Motor neuron (in vitro differentiated cells): ENCODE measurements at regions of chr6 and their contacts with region 1.

Region 1: DNA sequence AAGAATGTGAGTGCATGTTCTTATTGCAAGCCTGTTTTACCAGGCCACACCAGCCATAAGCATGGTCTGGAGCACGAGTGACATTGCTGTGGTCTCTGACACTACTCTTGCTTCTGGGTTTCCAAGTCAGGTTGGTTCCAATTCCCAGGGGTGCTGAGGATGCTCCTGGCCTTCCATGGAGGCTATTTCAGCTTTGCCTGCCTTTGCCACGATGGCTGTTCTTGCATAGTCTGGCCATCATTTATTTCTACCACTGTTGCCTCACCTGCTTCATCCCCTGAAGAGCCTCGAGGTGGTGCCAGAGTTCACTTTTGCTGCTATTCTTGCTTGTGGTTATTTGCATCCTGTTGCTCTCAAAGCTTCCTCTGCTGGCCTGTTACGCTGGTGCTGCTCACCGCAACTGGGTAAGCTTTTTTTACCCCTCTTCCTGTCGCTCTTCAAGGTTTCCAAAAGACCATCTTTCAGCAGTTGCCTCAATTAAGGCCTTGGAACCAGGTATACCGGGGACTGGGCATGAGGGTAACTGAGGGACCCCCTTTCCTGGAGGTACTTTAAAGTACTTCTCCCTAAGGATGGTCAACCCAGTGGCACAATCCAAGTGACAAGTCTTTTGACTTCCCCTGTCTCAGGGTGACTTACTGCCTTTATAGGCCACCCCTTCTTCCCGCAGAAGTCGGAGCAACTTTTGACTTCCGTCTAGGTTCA is 64.5 kb downstream of the AKAP7 start:
- ATAC-seq: peak in 5 of 8 experiments; percentile 68 to 99 (median 98)
- H3K4me3 ChIP-seq: no peak overlapping the region
- H3K27ac ChIP-seq: no peak overlapping the region
- H3K4me1 ChIP-seq: no peaks in the 10 kb centered on the region

Region 2: DNA sequence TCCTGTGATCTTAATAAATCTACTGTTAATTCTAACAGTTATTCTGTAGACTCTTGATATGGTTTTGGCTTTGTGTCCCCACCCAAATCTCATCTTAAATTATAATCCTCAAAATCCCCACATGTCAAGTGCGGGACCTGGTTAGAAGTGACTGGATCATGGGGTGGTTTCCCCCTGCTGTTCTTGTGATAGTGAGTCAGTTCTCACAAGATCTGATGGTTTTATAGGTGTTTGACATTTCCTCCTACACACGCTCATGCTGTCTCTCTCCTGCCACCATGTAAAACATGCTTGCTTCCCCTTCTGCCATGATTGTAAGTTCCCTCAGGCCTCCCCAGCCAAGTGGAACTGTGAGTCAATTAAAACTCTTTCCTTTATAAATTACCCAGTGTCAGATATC is 126.1 kb before region 1 on chr6:
- in situ Hi-C with region 1: no loop called
- ATAC-seq: no peak
- H3K4me3 ChIP-seq: no peak overlapping the region
- H3K27ac ChIP-seq: no peak overlapping the region
- H3K4me1 ChIP-seq: no peaks in the 10 kb centered on the region

Region 3: DNA sequence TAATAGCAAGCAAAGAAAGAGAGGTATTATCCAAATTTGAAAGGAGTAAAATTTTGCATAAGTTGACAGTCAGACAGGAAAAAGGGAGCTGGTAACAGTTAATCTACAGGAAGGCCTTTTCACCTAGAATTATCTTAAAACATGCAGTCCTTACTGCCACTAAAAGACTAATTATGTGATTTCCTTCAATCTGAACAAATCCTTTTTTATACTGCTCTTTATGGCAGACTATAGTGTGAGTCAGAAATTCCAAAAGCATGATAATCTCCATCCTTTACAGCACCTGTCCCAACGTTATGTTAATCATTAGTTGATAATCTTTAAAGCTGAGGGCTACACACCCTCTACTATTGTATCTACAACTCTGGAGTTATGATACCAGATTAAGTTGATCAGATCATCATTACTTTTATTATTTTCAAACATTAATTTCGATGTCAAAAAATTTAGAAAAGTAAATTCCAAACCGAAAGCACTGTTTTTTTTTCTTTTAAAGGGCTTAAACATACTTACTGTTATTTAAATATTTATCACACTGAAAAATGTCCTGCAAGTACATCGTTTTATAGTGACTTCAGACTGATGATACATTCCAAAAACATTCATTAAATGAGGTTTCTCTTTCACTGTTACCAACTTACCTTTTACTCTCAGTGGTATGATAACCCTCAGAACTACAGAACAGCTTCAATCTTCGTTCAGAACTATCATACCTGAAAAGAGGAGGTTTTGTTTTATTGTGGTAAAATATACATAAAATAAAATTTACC is 97.6 kb before region 1 on chr6:
- in situ Hi-C with region 1: no loop called
- ATAC-seq: no peak
- H3K4me3 ChIP-seq: no peak overlapping the region
- H3K27ac ChIP-seq: no peak overlapping the region
- H3K4me1 ChIP-seq: no peaks in the 10 kb centered on the region

Region 4: GRCh38 chr6:131519670-131520436 is 320.1 kb after region 1 on chr6:
- in situ Hi-C with region 1: loop called in 4 of 9 experiments (anchors 10 to 25 kb)
- ATAC-seq: peak in 3 of 8 experiments; percentile 90 to 97 (median 91)
- H3K4me3 ChIP-seq: no peak overlapping the region
- H3K27ac ChIP-seq: no peak overlapping the region
- H3K4me1 ChIP-seq: no peaks in the 10 kb centered on the region

Region 5: DNA sequence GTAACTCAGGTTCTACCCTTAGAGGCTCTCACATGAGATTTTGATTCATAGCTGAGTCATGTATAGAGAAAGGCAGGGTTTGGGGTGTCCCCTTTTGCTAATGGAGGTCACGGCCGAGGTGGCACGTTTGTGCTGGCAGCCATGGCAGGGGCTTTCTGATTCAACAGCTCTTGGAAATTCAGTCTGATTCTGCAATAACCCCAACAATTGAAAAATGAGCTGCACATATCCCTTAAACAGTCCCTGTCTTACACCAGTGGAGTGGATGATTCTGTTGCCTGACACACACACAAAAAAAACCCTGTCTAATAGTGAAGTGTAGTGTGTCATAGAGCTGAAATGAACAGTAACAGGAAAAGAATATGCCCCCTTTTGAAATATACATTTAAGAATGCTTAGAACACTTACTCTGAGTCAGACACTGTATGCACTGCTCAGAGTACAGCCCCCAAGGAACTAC is 332.9 kb after region 1 on chr6:
- in situ Hi-C with region 1: loop called in 3 of 9 experiments (anchors 25 kb)
- ATAC-seq: no peak
- H3K4me3 ChIP-seq: no peak overlapping the region
- H3K27ac ChIP-seq: no peak overlapping the region
- H3K4me1 ChIP-seq: no peaks in the 10 kb centered on the region